ENCODE measurements at regions of chr1 and their contacts with region 1.

Region 1: GRCh38 chr1:12596007-12596821 is 21.8 kb downstream of the DHRS3 start:
- DNase-seq: peak; percentile 85 to 92 (median 86)
- H3K4me3 ChIP-seq: peak overlapping the region; percentile 21
- H3K27ac ChIP-seq: peak overlapping the region; percentile 15 to 93
- H3K4me1 ChIP-seq: peaks cover 38% of the 10 kb centered on the region
- H3K27me3 ChIP-seq: no peaks in the 10 kb centered on the region
- CTCF ChIP-seq: no peak
- EP300 ChIP-seq: no peak
- POLR2A ChIP-seq: no peak

Region 2: GRCh38 chr1:12477936-12478611 is 118.1 kb before region 1 on chr1:
- intact Hi-C with region 1: loop called in 1 of 4 experiments (anchors 10 kb)
- DNase-seq: peak; percentile 80 to 95 (median 93)
- H3K4me3 ChIP-seq: no peak overlapping the region
- H3K27ac ChIP-seq: peak overlapping the region in 1 of 2 donors; percentile 83
- H3K4me1 ChIP-seq: peaks cover 21% of the 10 kb centered on the region
- H3K27me3 ChIP-seq: no peaks in the 10 kb centered on the region
- CTCF ChIP-seq: no peak
- EP300 ChIP-seq: no peak
- POLR2A ChIP-seq: no peak

Region 3: DNA sequence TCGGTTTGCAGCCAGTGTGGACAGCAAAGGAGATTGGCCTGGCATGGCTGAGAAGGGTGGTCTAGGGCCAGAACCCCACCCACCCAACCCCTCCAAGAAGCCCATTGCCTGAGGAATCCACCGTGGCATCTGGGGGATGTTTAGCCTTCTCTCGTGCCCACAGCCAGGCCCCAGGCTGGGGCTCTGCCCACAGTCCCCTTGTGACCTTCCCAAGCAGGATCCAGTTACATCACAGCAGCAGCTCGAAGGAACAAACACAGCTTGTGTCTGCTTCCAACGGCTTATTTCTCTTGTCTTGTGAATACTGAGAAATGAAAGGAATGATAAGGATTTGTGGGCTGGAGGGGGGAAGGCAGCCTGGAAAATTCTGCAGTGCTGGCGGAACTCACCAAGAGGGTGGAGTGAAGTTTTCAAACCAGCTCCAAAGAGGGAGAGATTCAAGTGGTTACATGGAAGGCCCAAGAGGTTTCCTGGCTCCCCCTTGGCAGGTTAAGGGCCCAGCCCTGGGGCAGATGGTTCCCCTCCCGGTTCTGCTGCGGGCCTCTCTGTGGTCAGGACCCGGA is 39.8 kb before region 1 on chr1:
- intact Hi-C with region 1: loop called in 1 of 4 experiments (anchors 5 kb)
- DNase-seq: peak; percentile 61 to 78 (median 67)
- H3K4me3 ChIP-seq: no peak overlapping the region
- H3K27ac ChIP-seq: peak overlapping the region; percentile 70 to 85
- H3K4me1 ChIP-seq: peaks cover 10% of the 10 kb centered on the region
- H3K27me3 ChIP-seq: no peaks in the 10 kb centered on the region
- CTCF ChIP-seq: no peak
- EP300 ChIP-seq: no peak
- POLR2A ChIP-seq: no peak

Measured in ovary (tissue), 10 donors.